Natural killer cell (primary cell): ENCODE measurements at regions of chr9 and their contacts with region 1.

Region 1: GRCh38 chr9:4984621-4985385 is at the start of gene JAK2:
- DNase-seq: peak; percentile 75 to 88
- ATAC-seq: peak; percentile 80 to 92 (median 85)
- H3K4me3 ChIP-seq: peak within 1 kb of the TSS; percentile 67
- H3K4me3 Mint-ChIP-seq: peak within 1 kb of the TSS; percentile 98
- H3K27ac ChIP-seq: peak within 1 kb of the TSS; percentile 79
- H3K27ac Mint-ChIP-seq: peak within 1 kb of the TSS; percentile 85 to 90
- H3K4me1 ChIP-seq: peaks cover 28% of the 10 kb centered on the region
- H3K4me1 Mint-ChIP-seq: peaks cover 27 to 39% of the 10 kb centered on the region in 2 donors
- H3K27me3 ChIP-seq: no peaks in the 10 kb centered on the region
- H3K27me3 Mint-ChIP-seq: peaks cover 0 to 8% of the 10 kb centered on the region in 2 donors
- CTCF ChIP-seq: peak; percentile 22
- total RNA-seq, gene JAK2: 20.8 to 43.9 (median 30.0) TPM

Region 2: DNA sequence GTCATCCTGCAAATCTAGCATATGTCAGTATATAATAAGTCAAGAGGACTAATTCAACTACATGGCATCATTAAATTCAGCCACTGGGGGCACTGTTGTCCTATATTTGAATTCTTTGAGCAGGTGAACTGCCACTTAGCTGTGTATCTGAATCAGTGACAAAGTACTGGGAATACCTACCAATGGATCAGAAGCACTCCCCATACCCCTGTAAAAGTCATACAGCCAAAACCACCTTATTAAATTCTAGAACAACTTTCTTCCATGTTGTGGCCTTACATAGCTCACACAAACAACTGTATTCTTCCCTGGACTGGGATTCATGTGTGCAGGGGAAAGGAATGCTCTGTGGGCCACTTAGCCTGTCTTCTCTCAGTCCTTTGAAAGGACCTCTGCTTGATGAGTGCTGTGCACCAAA is 380.1 kb before region 1 on chr9:
- intact Hi-C with region 1: loop called (anchors 1 kb)
- DNase-seq: peak; percentile 30 to 82
- ATAC-seq: peak; percentile 79 to 92 (median 81)
- H3K4me3 ChIP-seq: no peak overlapping the region
- H3K4me3 Mint-ChIP-seq: no peak overlapping the region
- H3K27ac ChIP-seq: no peak overlapping the region
- H3K27ac Mint-ChIP-seq: no peak overlapping the region
- H3K4me1 ChIP-seq: peaks cover 3% of the 10 kb centered on the region
- H3K4me1 Mint-ChIP-seq: peaks cover 6 to 20% of the 10 kb centered on the region in 2 donors
- H3K27me3 ChIP-seq: no peaks in the 10 kb centered on the region
- H3K27me3 Mint-ChIP-seq: no peaks in the 10 kb centered on the region
- CTCF ChIP-seq: peak; percentile 82

Region 3: DNA sequence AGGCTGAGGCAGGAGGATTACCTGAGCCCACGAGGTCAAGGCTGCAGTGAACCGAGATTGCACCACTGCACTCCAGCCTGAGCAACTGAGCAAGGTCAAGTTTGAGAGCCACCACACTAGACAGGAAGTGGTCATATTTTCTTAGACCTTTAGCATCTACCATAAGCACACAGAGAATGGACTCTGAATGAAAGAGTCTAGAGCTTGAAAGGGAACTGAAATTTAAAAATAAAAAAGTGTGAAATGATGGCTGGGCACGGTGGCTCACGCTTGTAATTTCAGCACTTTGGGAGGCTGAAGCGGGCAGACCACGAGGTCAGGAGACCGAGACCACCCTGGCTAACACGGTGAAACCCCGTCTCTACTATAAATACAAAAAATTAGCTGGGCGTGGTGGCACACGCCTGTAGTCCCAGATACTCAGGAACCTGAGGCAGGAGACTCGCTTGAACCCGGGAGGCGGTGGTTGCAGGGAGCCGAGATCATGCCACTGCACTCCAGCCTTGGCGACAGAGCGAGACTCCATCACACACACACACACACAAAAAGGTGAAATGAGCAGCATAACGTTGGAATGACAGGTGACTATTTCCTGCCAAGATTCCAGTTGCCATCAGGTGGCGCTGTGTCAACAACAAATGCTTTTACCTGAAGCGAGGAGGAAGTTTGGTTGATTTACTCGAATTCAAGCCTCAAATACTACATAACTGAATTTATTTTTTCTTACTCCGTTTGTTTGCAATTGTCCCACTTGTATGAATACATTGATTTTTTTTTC is 222.5 kb before region 1 on chr9:
- intact Hi-C with region 1: loop called (anchors 1 kb)
- DNase-seq: peak; percentile 62 to 91
- ATAC-seq: peak; percentile 62 to 79 (median 69)
- H3K4me3 ChIP-seq: no peak overlapping the region
- H3K4me3 Mint-ChIP-seq: peak overlapping the region; percentile 64
- H3K27ac ChIP-seq: no peak overlapping the region
- H3K27ac Mint-ChIP-seq: no peak overlapping the region
- H3K4me1 ChIP-seq: peaks cover 22% of the 10 kb centered on the region
- H3K4me1 Mint-ChIP-seq: peaks cover 7 to 15% of the 10 kb centered on the region in 2 donors
- H3K27me3 ChIP-seq: no peaks in the 10 kb centered on the region
- H3K27me3 Mint-ChIP-seq: peaks cover 0 to 10% of the 10 kb centered on the region in 2 donors
- CTCF ChIP-seq: peak; percentile 90

Region 4: DNA sequence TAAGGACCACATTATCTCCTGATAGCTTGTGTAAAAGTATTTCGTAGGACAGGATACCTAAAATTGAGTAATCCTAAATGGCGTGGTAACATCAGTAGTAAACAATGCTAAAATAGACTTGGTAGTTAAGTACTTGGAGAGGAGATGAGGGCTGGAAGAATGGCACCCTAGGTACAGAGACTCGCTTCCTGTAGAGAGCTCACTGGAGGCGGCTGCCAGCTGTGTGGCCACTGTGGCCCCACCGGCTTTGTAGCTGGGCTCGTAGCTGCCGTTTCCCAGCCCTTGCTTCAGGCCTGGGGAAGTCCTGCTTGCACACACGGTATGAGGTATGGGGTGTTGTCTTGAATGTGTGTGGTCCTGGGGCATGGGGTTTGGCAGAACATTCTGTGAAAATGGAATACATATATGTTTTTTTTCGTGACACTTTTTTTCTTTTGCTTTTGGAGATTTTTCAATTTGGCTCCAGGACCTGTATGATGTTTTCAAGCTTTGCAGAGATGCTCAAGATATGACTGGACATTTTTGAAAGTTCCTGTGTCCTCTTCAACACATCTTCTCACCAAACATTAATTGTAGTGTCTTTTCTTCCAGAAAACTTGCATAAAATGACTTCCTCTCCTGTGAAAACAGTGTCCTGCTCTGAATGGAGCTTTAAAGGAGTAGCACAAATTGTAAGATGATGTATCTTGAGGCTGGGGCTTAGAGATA is 134.0 kb before region 1 on chr9:
- intact Hi-C with region 1: loop called (anchors 2 kb)
- DNase-seq: peak in 1 of 2 donors; percentile 29
- ATAC-seq: peak; percentile 65 to 78 (median 75)
- H3K4me3 ChIP-seq: no peak overlapping the region
- H3K4me3 Mint-ChIP-seq: peak overlapping the region; percentile 82
- H3K27ac ChIP-seq: peak overlapping the region; percentile 2
- H3K27ac Mint-ChIP-seq: peak overlapping the region in 1 of 2 donors; percentile 61
- H3K4me1 ChIP-seq: peaks cover 16% of the 10 kb centered on the region
- H3K4me1 Mint-ChIP-seq: peaks cover 14 to 26% of the 10 kb centered on the region in 2 donors
- H3K27me3 ChIP-seq: no peaks in the 10 kb centered on the region
- H3K27me3 Mint-ChIP-seq: no peaks in the 10 kb centered on the region
- CTCF ChIP-seq: no peak

Region 5: DNA sequence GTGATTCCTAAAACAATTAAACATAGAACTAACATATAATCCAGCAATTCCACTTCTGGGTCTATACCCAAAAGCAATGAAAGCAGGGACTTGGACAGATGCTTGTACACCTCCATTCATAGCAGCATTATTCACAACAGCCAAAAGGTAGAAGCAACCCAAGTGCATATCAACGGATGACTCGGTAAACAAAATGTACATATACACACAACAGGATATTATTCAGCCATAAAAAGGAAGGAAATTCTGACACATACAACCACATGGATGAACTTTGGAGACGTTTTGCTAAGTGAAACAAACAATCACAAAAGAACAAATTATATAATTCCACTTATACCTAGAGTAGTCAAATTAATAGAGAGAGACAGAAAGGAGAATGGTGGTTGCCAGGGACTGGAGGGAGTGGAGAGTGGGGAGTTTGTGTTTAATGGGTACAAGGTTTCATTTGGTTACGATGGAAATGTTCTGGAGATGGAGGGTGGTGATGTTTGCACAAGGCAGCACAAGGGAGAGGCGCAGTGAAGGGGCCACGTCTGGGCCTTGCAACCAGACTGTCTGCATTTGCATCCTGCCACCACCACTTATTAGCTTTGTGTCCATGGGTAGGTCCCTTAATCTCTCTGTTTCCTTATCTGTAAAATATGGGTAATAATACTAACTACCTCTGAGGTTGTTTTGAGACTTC is 391.1 kb after region 1 on chr9:
- intact Hi-C with region 1: no loop called
- DNase-seq: peak in 1 of 2 donors; percentile 6
- ATAC-seq: no peak
- H3K4me3 ChIP-seq: no peak overlapping the region
- H3K4me3 Mint-ChIP-seq: no peak overlapping the region
- H3K27ac ChIP-seq: no peak overlapping the region
- H3K27ac Mint-ChIP-seq: peak overlapping the region in 1 of 2 donors; percentile 2
- H3K4me1 ChIP-seq: peaks cover 5% of the 10 kb centered on the region
- H3K4me1 Mint-ChIP-seq: peaks cover 22 to 26% of the 10 kb centered on the region in 2 donors
- H3K27me3 ChIP-seq: no peaks in the 10 kb centered on the region
- H3K27me3 Mint-ChIP-seq: no peaks in the 10 kb centered on the region
- CTCF ChIP-seq: no peak

Region 6: DNA sequence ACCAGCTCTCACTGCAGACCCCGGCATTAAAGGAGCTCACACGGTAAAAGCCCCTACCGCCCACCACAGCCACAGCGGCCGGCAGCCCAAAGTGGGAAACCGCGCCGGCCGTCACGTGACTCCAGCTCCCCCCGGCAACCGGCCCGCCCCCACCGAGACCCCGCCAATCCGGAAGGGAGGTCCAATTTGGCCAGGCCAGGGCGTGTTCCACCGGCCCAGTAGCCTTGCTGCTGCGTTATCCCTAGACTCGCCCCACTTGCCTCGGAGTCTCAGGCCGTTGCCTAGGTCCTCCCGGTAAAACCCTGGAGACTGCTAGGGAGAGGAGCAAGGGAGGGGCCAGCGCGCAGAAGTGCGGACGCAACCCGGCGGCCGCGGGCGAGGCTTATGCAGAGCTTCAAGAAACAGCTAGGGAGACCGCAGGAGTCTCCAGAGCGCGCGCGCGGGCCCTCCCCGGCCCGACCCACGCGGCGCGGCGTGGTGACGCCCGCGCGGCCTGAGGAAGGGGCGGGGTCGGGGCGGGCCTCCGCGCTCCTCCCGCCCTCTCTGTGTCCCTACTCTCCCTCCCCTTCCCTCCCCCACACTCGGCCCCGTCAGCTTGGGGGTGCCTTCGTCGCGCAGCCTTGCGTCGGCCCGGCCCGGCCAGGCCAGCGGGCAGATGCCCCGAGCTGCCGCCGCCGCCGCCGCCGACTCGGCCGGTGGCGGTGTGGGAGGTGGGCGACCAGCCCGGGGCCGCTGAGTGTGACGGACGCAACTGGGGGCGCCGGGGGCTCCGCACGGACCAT is 643.9 kb after region 1 on chr9 and contains the start of gene RIC1:
- intact Hi-C with region 1: loop called (anchors 10 kb)
- DNase-seq: peak; percentile 89 to 94
- ATAC-seq: peak; percentile 87 to 97 (median 88)
- H3K4me3 ChIP-seq: peak within 1 kb of the TSS; percentile 99
- H3K4me3 Mint-ChIP-seq: peak within 1 kb of the TSS; percentile 99
- H3K27ac ChIP-seq: peak within 1 kb of the TSS; percentile 92
- H3K27ac Mint-ChIP-seq: peak within 1 kb of the TSS; percentile 93
- H3K4me1 ChIP-seq: peaks cover 27% of the 10 kb centered on the region
- H3K4me1 Mint-ChIP-seq: peaks cover 49 to 57% of the 10 kb centered on the region in 2 donors
- H3K27me3 ChIP-seq: no peaks in the 10 kb centered on the region
- H3K27me3 Mint-ChIP-seq: no peaks in the 10 kb centered on the region
- CTCF ChIP-seq: no peak
- total RNA-seq, gene RIC1: 23.5 to 33.9 (median 31.8) TPM